Mammary epithelial cell (primary cell): ENCODE measurements at regions of chr2 and their contacts with region 1.

Region 1: DNA sequence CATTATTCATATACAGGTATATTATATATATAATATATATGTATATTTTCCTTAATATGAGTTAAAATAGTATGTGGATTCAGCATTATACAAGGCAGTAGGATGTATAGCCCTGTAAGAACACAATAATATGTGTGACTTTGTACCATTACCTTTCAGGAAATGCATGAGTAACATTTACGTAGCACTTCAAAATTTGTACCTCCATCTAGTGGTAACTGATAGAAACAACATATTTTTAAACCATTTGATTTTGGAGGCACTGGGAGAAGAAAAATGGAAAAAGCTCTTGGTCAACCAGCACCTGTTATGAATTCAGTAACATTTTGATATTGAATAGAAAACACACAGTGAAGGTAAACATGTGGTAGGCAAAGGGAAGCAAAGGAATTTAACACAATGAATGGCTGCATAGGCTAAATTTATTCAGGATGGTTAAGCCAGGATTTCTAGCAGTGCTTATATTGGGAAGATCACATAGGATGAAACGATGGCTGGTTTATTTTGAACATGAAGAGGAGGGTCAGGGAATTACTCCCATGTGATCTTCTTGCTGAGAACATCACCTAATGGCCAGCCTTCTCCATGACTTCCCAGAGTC is 565.5 kb downstream of the CCDC85A start:
- DNase-seq: peak; percentile 28
- H3K4me3 ChIP-seq: no peak overlapping the region
- H3K27ac ChIP-seq: no peak overlapping the region
- H3K4me1 ChIP-seq: no peaks in the 10 kb centered on the region
- H3K27me3 ChIP-seq: no peaks in the 10 kb centered on the region
- CTCF ChIP-seq: peak; percentile 56 to 60

Region 2: DNA sequence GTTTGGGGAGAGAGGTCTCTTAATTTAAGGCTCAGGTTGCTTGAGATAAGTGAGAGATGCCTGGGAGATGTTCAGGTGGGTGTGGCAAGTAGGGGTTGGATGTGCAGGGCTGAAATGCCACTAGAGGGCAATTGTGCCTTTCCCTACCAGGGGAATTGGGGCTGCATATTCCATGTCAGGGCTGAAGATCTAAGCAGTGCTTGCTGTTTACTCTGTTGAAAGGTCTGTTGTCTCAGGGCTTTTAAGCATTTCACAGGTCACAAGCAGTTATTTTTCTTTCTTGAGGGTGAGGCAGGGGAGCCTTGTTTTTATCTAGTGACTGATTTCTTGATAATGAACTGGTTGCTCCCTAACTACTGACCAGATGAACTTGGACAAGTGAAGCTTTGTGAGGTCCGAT is 557.6 kb before region 1 on chr2:
- CTCF ChIA-PET with region 1: no interaction called
- dilution Hi-C with region 1: no loop called
- in situ Hi-C with region 1: loop called (anchors 10 to 25 kb)
- intact Hi-C with region 1: loop called (anchors 1 kb)
- DNase-seq: peak; percentile 46
- H3K4me3 ChIP-seq: no peak overlapping the region
- H3K27ac ChIP-seq: no peak overlapping the region
- H3K4me1 ChIP-seq: no peaks in the 10 kb centered on the region
- H3K27me3 ChIP-seq: no peaks in the 10 kb centered on the region
- CTCF ChIP-seq: peak; percentile 70 to 91

Region 3: GRCh38 chr2:56288838-56289580 is 460.2 kb before region 1 on chr2:
- CTCF ChIA-PET with region 1: no interaction called
- dilution Hi-C with region 1: no loop called
- in situ Hi-C with region 1: no loop called
- intact Hi-C with region 1: loop called (anchors 2 kb)
- DNase-seq: no peak
- H3K4me3 ChIP-seq: no peak overlapping the region
- H3K27ac ChIP-seq: peak overlapping the region; percentile 5
- H3K4me1 ChIP-seq: peaks cover 18% of the 10 kb centered on the region
- H3K27me3 ChIP-seq: peaks cover 3% of the 10 kb centered on the region
- CTCF ChIP-seq: peak in 1 of 2 donors; percentile 38

Region 4: DNA sequence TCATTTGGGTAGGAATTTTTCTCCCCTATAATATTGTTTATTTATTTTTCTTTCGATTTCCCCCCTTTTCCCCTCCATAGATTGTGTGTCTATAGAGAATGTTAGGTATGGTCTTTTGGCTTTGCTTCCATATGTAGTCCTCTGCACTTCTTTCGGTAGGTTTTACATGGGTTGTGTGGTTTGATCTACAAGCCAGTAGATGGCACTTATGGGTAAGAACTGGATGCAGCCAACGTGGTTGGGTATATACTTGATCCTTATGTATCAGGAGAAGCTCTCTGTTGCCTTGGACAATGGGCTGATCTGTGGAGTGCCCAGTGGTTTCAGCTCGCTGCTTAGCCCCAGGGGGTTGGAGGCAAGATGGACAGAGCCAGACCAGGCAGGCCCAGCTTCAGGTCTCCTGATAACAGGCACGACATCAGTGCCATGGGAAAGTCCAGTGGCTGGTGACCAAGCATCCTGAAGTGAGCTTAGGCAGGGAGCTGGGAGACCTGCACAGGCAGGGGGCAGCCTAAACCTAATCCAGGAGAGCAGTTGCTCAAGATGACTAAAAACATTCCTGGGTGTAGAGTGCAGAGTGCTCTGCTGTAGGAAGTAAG is 77.2 kb before region 1 on chr2:
- CTCF ChIA-PET with region 1: interaction called, 3 read pairs
- dilution Hi-C with region 1: no loop called
- in situ Hi-C with region 1: no loop called
- intact Hi-C with region 1: loop called (anchors 1 kb)
- DNase-seq: peak; percentile 4
- H3K4me3 ChIP-seq: no peak overlapping the region
- H3K27ac ChIP-seq: no peak overlapping the region
- H3K4me1 ChIP-seq: no peaks in the 10 kb centered on the region
- H3K27me3 ChIP-seq: no peaks in the 10 kb centered on the region
- CTCF ChIP-seq: peak in 1 of 2 donors; percentile 31